Panc1 (cell line): ENCODE measurements at regions of chr1 and their contacts with region 1.

Region 1: GRCh38 chr1:42319128-42319851 is 15.7 kb downstream of the FOXJ3 start:
- DNase-seq: no peak
- ATAC-seq: no peak
- H3K4me3 ChIP-seq: no peak overlapping the region
- H3K27ac ChIP-seq: no peak overlapping the region
- H3K4me1 ChIP-seq: peaks cover 33% of the 10 kb centered on the region
- H3K27me3 ChIP-seq: no peaks in the 10 kb centered on the region
- CTCF ChIP-seq: no peak

Region 2: DNA sequence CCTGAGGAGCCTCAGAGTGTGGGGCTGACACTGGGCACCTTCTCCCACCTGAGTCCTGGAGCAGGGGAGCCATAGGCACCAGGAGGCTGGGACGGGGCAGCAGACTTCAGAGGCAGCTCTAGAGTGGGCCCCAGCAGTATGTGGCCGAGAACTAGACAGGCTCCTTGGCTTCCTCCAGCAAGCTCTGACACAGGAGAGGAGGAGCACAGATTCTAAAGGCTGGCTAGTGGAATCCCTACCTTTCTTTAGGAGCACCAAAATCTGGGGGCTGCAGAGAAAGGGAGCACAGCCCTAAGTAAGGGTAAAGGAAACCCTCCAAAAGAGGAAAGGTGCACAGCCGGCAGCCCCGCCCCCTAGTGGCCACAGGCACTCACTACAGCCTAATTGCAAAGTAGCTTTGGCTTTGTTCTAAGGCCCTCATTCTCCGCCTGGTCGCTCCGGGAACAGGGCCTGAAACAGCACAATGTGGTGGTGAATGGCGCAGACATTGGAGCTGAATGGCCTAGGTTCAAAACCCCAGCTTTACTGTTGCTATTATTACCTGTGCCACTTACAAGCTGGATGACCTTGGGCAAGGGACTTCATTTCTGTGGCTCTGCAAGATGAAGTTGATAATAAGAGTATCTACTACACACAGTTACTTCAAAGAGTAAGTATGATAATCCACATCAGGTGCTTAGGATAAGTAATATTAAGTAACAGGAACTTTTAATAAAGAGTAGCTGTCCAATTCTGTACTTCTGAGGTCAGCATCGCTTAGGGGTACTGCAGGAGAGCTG is 145.9 kb before region 1 on chr1:
- CTCF ChIA-PET with region 1: no interaction called
- POLR2A ChIA-PET with region 1: interaction called, 8 read pairs
- in situ Hi-C with region 1: no loop called
- intact Hi-C with region 1: loop called (anchors 10 kb)
- DNase-seq: peak; percentile 43
- ATAC-seq: peak; percentile 66
- H3K4me3 ChIP-seq: no peak overlapping the region
- H3K27ac ChIP-seq: no peak overlapping the region
- H3K4me1 ChIP-seq: no peaks in the 10 kb centered on the region; the same call in 1 of the 2 replicates
- H3K27me3 ChIP-seq: no peaks in the 10 kb centered on the region
- CTCF ChIP-seq: peak; percentile 99

Region 3: GRCh38 chr1:42282024-42282579 is 37.2 kb before region 1 on chr1:
- CTCF ChIA-PET with region 1: no interaction called
- POLR2A ChIA-PET with region 1: no interaction called
- in situ Hi-C with region 1: no loop called
- intact Hi-C with region 1: no loop called
- DNase-seq: no peak
- ATAC-seq: no peak
- H3K4me3 ChIP-seq: no peak overlapping the region
- H3K27ac ChIP-seq: no peak overlapping the region
- H3K4me1 ChIP-seq: peaks cover 6% of the 10 kb centered on the region
- H3K27me3 ChIP-seq: no peaks in the 10 kb centered on the region
- CTCF ChIP-seq: no peak